Transverse colon (tissue), 4 donors: ENCODE measurements at regions of chr7 and their contacts with region 1.

Region 1: DNA sequence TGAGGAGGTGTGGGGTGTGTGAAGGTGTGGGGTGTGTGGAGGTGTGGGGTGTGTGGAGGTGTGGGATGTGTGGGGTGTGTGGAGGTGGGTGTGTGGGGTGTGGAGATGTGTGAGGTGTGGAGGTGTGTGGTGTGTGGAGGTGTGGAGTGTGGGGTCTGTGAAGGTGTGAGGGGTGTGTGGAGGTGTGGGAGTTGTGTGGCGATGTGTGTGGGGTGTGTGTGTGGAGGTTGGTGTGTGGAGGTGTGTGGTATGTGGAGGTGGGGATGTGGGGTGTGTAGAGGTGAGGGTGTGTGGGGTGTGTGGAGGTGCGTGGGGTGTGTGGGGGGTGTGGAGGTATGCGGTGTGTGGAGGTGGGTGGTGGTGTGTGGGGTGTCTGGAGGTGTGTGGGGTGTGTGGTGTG is 34.8 kb downstream of the SPDYE17 start:
- DNase-seq: no peak
- H3K4me3 ChIP-seq: no peak overlapping the region
- H3K27ac ChIP-seq: no peak overlapping the region
- H3K4me1 ChIP-seq: no peaks in the 10 kb centered on the region
- H3K27me3 ChIP-seq: no peaks in the 10 kb centered on the region
- CTCF ChIP-seq: no peak
- EP300 ChIP-seq: no peak
- POLR2A ChIP-seq: no peak

Region 2: DNA sequence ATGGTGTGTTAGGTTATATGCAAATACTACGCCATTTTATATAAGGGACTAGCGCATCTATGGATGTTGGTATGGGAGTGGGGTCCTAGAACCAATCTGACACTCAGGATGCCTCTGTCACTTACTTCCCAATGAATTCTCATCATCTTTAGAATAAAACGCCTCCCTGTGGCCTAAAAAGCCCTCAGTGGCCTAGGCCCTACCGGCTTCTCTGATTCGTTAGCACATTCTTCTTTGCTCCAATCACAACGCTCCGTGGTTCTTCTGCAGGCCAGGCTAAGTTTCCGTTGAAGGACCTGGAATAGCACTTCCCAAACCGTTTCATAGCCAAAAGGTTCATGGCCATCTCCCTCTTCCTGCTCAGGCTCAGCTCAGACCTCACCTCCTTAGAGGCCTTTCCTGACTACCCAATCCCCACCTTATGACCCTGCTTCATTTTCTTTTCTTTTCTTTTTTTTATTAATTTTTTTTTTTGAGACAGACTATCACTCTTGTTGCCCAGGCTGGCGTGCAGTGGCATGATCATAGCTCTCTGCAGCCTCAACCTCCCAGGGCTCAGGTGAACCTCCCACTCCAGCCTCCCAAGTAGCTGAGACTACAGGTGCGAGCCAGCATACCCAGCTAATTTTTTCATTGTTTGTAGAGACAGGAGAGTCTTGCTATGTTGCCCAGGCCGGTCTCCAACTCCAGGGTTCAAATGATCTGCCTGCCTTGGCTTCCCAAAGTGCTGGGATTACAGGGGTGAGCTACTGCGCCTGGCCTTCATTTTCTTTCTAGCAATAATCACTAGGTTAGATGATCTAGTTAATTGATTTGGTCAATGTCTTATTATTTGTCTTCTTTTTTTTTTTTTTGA is 614.1 kb before region 1 on chr7:
- in situ Hi-C with region 1: no loop called
- intact Hi-C with region 1: no loop called
- DNase-seq: no peak
- H3K4me3 ChIP-seq: no peak overlapping the region
- H3K27ac ChIP-seq: no peak overlapping the region
- H3K4me1 ChIP-seq: peaks cover 4 to 16% (median 15%) of the 10 kb centered on the region in 4 donors
- H3K27me3 ChIP-seq: no peaks in the 10 kb centered on the region
- CTCF ChIP-seq: no peak
- EP300 ChIP-seq: no peak
- POLR2A ChIP-seq: no peak

Region 3: DNA sequence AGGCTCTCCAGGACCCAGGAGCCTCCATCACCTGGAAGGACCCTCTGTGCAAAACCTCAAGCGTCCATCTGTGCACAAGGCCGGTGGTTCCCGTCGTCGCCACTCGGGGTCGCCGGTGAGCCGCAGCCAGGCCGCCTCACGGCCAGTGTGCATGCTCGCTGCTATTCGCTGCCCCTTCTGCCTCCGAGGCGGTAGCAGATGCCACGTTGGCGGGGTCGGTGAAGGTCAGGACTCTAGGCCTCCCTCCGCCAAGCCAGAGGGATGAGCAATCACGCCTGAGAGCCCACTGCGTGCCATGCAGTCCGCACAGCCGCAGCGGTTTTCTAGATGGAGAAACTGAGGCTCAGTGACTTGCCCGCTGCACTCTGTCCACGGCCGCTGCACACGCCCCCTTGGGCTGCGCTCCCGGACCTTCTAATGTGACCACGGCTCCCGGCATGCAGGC is 481.4 kb before region 1 on chr7:
- in situ Hi-C with region 1: loop called in 1 of 4 experiments (anchors 25 kb)
- intact Hi-C with region 1: no loop called
- DNase-seq: peak; percentile 48
- H3K4me3 ChIP-seq: peak overlapping the region in 1 of 4 donors; percentile 35
- H3K27ac ChIP-seq: no peak overlapping the region
- H3K4me1 ChIP-seq: peaks cover 7 to 17% (median 10%) of the 10 kb centered on the region in 4 donors
- H3K27me3 ChIP-seq: peaks cover 2% of the 10 kb centered on the region
- CTCF ChIP-seq: peak in 3 of 5 experiments; percentile 64 to 94 (median 91)
- EP300 ChIP-seq: no peak
- POLR2A ChIP-seq: no peak